Lower leg skin (tissue), 4 donors: ENCODE measurements at regions of chr5 and their contacts with region 1.

Region 1: DNA sequence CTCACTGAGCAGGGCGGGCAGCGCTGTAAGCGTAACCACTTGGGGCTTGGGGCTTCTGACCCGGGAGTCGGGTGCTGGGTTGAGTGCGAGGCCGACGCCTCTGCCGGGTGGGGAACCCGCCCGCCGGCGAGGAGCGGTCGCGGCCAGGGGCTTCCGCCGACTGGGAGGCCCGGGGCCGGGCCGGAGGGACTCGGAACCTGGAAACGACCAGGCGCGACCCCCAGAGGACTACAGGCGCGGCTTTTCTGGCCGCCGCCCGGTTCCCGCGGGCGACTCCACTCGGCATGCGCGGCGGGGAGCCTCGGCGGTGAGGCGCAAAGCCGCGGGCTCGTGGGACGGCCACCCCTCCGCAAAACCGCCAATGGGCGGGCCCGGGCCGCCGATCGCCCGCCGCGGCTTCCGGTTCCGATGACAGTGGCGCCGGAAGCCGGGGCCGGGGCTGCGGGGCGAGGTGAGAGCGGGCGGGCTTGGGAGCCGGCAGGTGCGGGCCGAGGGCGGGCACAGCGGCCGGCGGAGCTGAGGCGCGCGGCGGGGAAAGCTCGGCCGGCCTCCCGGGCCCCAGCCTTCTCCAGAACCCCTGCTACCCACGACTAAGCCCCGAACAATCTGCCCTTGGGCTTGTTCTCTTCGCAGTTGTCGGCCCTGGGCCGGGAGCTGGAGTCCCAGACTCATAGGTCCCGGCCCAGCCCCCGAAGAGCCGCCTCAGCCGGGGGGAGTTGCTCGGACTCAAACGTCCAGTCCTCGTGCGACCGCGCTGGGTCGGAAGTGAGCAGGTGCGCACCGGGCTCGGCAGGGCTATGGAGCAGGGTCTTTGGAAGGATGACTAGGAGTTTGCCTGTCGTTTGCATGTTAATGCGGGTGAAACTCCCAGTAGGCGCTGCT is at the start of gene RMND5B:
- DNase-seq: peak; percentile 63 to 96
- H3K4me3 ChIP-seq: peak within 1 kb of the TSS; percentile 90
- CTCF ChIP-seq: no peak
- POLR2A ChIP-seq: peak in 1 of 2 donors; percentile 29
- total RNA-seq, gene RMND5B: 47.4 to 83.2 (median 56.2) TPM

Region 2: DNA sequence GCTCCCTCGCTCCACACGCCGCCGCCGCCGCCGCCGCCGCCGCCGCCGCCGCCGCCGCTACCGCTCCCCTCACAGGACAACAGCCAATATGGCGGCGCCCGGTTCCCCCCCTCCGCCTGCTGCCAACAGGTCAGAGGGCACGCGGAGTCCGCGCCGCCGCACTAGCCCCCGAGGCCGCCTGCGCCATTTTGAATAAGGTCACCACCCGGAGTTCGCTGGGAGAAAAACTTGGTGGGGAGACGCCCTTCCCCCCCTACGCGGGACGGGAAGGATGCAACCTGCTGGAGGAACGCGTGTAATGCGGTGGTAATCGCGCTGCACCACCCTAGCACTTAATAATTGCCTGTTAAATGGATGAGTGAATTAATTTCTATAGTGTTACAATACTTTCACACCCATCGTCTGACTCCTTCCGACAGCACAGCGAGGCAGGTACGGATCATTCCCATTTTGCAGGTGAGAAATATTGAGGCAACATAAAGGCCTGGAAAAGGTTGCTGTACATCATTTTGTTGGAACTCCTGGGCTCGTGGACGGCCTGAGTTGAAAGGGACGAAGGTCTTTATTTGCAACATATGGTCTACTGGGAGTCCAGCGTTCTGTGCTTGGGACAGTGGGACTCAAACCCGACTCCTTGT is 576.3 kb before region 1 on chr5 and contains the start of gene FAM193B:
- intact Hi-C with region 1: loop called (anchors 5 kb)
- DNase-seq: peak; percentile 90 to 99
- H3K4me3 ChIP-seq: peak within 1 kb of the TSS; percentile 73
- CTCF ChIP-seq: no peak
- POLR2A ChIP-seq: no peak
- total RNA-seq, gene FAM193B: 57.0 to 128 (median 69.7) TPM